Activated CD8-positive, alpha-beta T cell treated with anti-CD3 and anti-CD28 coated beads for 36 hours (primary cell): ENCODE measurements at regions of chr2 and their contacts with region 1.

Region 1: DNA sequence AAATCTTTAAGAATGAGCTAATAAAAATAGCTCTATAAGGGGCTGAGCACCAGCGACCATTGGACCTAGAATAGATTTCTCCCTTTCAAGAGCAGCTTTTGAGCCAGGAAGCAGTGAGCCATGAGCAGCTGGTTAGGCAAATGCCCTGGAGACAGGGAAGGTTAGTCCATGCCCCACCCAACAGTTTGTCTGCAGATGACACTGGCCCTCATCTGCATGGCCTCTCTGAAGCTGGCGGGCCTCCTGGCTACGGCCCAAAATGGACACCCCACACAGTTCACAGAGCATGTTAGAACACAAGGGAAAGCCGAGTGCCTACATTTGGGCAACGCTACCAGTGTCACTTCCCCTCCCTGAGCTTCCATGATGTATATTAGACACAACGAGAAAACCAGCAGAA is 201.1 kb downstream of the MGAT5 start:
- DNase-seq: no peak
- ATAC-seq: no peak
- H3K4me3 Mint-ChIP-seq: no peak overlapping the region
- H3K27ac Mint-ChIP-seq: no peak overlapping the region
- H3K4me1 Mint-ChIP-seq: no peaks in the 10 kb centered on the region
- H3K27me3 Mint-ChIP-seq: no peaks in the 10 kb centered on the region
- CTCF ChIP-seq: no peak

Region 2: GRCh38 chr2:133886735-133887660 is 567.9 kb before region 1 on chr2:
- CTCF ChIA-PET with region 1: interaction called, 11 read pairs
- POLR2A ChIA-PET with region 1: no interaction called
- intact Hi-C with region 1: no loop called
- DNase-seq: peak; percentile 67
- ATAC-seq: peak; percentile 51
- H3K4me3 Mint-ChIP-seq: no peak overlapping the region
- H3K27ac Mint-ChIP-seq: no peak overlapping the region
- H3K4me1 Mint-ChIP-seq: no peaks in the 10 kb centered on the region
- H3K27me3 Mint-ChIP-seq: peaks cover 7% of the 10 kb centered on the region
- CTCF ChIP-seq: peak; percentile 51

Region 3: GRCh38 chr2:134436706-134437105 is 18.2 kb before region 1 on chr2:
- CTCF ChIA-PET with region 1: interaction called, 17 read pairs
- POLR2A ChIA-PET with region 1: interaction called, 3 read pairs
- intact Hi-C with region 1: no loop called
- DNase-seq: no peak
- ATAC-seq: no peak
- H3K4me3 Mint-ChIP-seq: no peak overlapping the region
- H3K27ac Mint-ChIP-seq: no peak overlapping the region
- H3K4me1 Mint-ChIP-seq: no peaks in the 10 kb centered on the region
- H3K27me3 Mint-ChIP-seq: no peaks in the 10 kb centered on the region
- CTCF ChIP-seq: no peak

Region 4: DNA sequence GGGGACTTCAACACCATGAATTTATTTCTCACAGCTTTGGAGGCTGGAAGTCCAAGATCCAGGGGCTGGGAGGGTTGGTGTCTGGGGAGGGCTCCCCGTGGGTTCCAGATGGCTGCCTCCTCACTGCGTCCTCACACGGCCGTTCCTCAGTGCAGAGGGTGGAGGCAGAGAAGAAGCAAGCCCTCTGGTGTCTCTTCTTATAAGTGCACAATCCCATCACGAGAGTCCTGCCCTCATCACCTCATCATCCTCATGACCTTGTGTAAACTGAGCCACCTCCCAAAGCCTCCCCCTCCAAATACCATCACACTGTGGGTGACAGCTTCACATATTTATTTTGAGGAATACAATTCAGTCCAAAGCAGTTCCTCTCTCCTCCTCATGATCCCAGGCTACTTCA is 237.6 kb after region 1 on chr2:
- CTCF ChIA-PET with region 1: interaction called, 10 read pairs
- POLR2A ChIA-PET with region 1: no interaction called
- intact Hi-C with region 1: no loop called
- DNase-seq: no peak
- ATAC-seq: peak; percentile 64
- H3K4me3 Mint-ChIP-seq: no peak overlapping the region
- H3K27ac Mint-ChIP-seq: no peak overlapping the region
- H3K4me1 Mint-ChIP-seq: no peaks in the 10 kb centered on the region
- H3K27me3 Mint-ChIP-seq: peaks cover 3% of the 10 kb centered on the region
- CTCF ChIP-seq: peak; percentile 14

Region 5: DNA sequence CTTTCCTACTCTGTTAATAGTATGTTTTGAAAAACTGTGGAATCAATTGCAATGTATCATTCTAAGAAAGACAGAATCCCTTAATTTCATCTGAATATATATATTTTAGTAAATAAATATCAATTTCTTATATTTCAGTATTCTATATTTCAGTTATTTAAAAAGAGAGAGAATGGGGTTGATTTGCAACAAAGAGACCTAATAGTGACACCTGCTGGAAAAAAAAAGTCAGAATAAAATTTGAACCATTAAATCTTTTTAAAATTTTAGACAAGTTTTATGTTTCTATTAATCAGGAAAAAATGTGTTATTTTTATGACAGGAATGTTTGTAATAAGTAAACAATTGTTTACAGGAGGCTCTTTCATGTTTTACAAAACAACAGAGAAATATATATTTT is 443.0 kb after region 1 on chr2:
- CTCF ChIA-PET with region 1: interaction called, 8 read pairs
- POLR2A ChIA-PET with region 1: no interaction called
- intact Hi-C with region 1: loop called (anchors 5 kb)
- DNase-seq: no peak
- ATAC-seq: no peak
- H3K4me3 Mint-ChIP-seq: no peak overlapping the region
- H3K27ac Mint-ChIP-seq: no peak overlapping the region
- H3K4me1 Mint-ChIP-seq: no peaks in the 10 kb centered on the region
- H3K27me3 Mint-ChIP-seq: no peaks in the 10 kb centered on the region
- CTCF ChIP-seq: peak; percentile 72